ENCODE measurements at regions of chr12 and their contacts with region 1.

Region 1: DNA sequence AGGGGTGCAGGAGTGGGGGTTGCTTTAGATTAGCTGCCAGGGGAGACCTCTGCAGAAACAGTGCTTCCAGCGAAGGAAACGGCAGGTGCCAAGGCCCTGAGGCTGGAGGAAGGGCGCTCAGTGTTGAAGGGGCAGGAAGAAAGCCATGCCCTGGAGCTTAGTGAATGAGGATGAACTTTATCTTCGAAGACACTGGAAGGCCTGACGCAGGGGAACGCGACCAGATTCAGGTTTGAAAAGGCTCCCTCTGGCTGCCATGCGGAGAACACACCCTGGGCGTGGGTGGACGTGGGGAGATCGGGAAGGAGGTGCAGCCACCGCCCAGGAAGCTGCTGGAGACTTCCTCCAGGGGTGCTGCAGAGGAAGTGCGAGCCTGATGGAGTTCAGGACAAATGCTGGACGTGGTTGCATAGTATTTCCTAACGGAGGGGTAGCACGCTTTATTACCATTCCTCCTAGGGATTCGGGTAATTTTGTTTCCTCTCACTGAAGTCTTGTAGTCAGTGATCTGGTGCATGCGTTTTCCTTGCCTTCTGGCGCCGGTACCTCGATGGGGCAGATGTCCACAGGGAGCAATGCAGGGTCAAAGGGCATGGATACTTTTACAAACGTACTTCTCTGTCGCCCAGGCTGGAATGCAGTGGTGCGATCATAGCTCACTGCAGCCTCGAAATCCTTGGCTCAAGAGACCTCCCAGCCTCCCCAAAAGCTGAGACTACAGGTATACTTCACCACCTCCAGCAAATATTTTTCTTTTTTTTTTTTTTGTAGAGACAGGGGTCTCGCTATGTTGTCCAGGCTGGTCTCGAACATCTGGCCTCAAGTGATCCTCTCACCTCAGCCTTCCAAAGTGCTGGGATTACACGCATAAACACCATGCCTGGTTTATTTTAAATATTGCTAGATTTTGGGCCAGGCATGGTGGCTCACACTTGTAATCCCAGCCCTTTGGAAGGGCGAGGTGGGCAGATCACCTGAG is 26.4 kb upstream of the UBC start:
- DNase-seq: peak; percentile 94 to 96
- H3K4me3 ChIP-seq: peak overlapping the region; percentile 52
- H3K4me3 Mint-ChIP-seq: no peak overlapping the region
- H3K27ac Mint-ChIP-seq: no peak overlapping the region
- H3K4me1 ChIP-seq: no peaks in the 10 kb centered on the region
- H3K4me1 Mint-ChIP-seq: no peaks in the 10 kb centered on the region
- H3K27me3 ChIP-seq: no peaks in the 10 kb centered on the region
- H3K27me3 Mint-ChIP-seq: no peaks in the 10 kb centered on the region
- CTCF ChIP-seq: peak; percentile 83 to 92

Region 2: GRCh38 chr12:124898200-124898922 is 42.5 kb before region 1 on chr12:
- CTCF ChIA-PET with region 1: interaction called, 13 read pairs
- POLR2A ChIA-PET with region 1: interaction called, 3 read pairs
- intact Hi-C with region 1: no loop called
- DNase-seq: peak; percentile 56 to 63
- H3K4me3 ChIP-seq: no peak overlapping the region
- H3K4me3 Mint-ChIP-seq: no peak overlapping the region
- H3K27ac Mint-ChIP-seq: peak overlapping the region; percentile 32
- H3K4me1 ChIP-seq: peaks cover 26% of the 10 kb centered on the region
- H3K4me1 Mint-ChIP-seq: peaks cover 18% of the 10 kb centered on the region
- H3K27me3 ChIP-seq: no peaks in the 10 kb centered on the region
- H3K27me3 Mint-ChIP-seq: no peaks in the 10 kb centered on the region
- CTCF ChIP-seq: peak; percentile 50 to 55

Region 3: GRCh38 chr12:124917135-124917840 is 23.6 kb before region 1 on chr12:
- CTCF ChIA-PET with region 1: interaction called, 17 read pairs
- POLR2A ChIA-PET with region 1: interaction called, 44 read pairs
- intact Hi-C with region 1: loop called (anchors 1 kb)
- DNase-seq: peak; percentile 97 to 99
- H3K4me3 ChIP-seq: peak overlapping the region; percentile 31
- H3K4me3 Mint-ChIP-seq: peak overlapping the region; percentile 98
- H3K27ac Mint-ChIP-seq: peak overlapping the region; percentile 100
- H3K4me1 ChIP-seq: peaks cover 42% of the 10 kb centered on the region
- H3K4me1 Mint-ChIP-seq: peaks cover 49% of the 10 kb centered on the region
- H3K27me3 ChIP-seq: no peaks in the 10 kb centered on the region
- H3K27me3 Mint-ChIP-seq: peaks cover 9% of the 10 kb centered on the region
- CTCF ChIP-seq: no peak

Region 4: DNA sequence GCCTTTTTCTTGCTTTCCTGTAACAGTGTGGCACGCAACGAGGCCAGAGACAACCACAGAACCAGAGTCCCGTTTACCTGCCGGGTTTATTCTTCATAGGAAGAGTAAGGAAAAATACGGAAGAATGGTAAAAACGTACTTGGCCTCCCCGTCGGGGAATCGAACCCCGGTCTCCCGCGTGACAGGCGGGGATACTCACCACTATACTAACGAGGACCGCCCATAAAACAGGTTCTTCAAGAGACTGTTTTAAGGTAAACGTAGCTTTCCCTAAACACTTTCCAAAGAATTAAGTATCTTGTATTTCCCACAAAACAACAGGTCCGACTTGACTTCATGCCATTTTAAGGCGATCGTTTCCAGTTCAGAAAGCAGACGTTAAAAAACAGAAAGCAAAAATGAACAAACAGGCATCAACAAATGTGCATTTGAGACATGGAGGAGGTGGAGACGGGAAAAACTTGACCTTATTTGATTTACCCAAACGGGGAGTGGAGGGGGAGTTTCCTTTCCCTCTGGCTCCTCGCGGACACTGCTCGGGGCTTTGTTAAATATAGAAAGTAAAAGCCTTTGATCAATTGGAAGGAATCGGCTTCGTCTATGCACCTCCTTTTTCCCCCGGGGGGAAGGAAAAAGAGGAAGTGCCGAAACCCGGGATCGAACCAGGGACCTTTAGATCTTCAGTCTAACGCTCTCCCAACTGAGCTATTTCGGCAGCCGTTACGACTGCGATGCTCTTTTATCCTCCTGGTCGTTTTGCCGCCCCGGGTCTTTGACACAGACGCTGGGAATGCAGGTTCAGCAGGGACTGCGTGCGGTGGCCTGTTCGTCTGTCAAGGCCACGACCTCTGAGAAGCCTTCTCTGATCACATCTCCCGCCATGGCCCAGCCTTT is 13.4 kb before region 1 on chr12:
- CTCF ChIA-PET with region 1: interaction called, 13 read pairs
- POLR2A ChIA-PET with region 1: interaction called, 4 read pairs
- intact Hi-C with region 1: loop called (anchors 1 kb)
- DNase-seq: peak; percentile 92 to 95
- H3K4me3 ChIP-seq: peak overlapping the region; percentile 86
- H3K4me3 Mint-ChIP-seq: peak overlapping the region; percentile 92
- H3K27ac Mint-ChIP-seq: peak overlapping the region; percentile 100
- H3K4me1 ChIP-seq: peaks cover 5% of the 10 kb centered on the region; the same call in 1 of the 2 replicates
- H3K4me1 Mint-ChIP-seq: peaks cover 27% of the 10 kb centered on the region
- H3K27me3 ChIP-seq: no peaks in the 10 kb centered on the region
- H3K27me3 Mint-ChIP-seq: peaks cover 5% of the 10 kb centered on the region
- CTCF ChIP-seq: no peak

Region 5: GRCh38 chr12:124992874-124993625 is 52.2 kb after region 1 on chr12:
- CTCF ChIA-PET with region 1: interaction called, 4 read pairs
- POLR2A ChIA-PET with region 1: interaction called, 4 read pairs
- intact Hi-C with region 1: loop called (anchors 1 kb)
- DNase-seq: peak; percentile 89 to 92
- H3K4me3 ChIP-seq: peak overlapping the region; percentile 60
- H3K4me3 Mint-ChIP-seq: peak overlapping the region; percentile 84
- H3K27ac Mint-ChIP-seq: peak overlapping the region; percentile 46
- H3K4me1 ChIP-seq: no peaks in the 10 kb centered on the region
- H3K4me1 Mint-ChIP-seq: peaks cover 18% of the 10 kb centered on the region
- H3K27me3 ChIP-seq: no peaks in the 10 kb centered on the region
- H3K27me3 Mint-ChIP-seq: no peaks in the 10 kb centered on the region
- CTCF ChIP-seq: peak; percentile 55 to 83

Measured in Caco-2 (cell line).